Activated CD4-positive, alpha-beta memory T cell treated with anti-CD3 and anti-CD28 coated beads for 36 hours (primary cell): ENCODE measurements at regions of chr19 and their contacts with region 1.

Region 1: GRCh38 chr19:35044317-35045117 is 3.0 kb downstream of the HPN start:
- DNase-seq: peak; percentile 77
- H3K4me3 Mint-ChIP-seq: no peak overlapping the region
- H3K27ac Mint-ChIP-seq: peak overlapping the region; percentile 21
- H3K4me1 Mint-ChIP-seq: peaks cover 25% of the 10 kb centered on the region
- H3K27me3 Mint-ChIP-seq: peaks cover 10% of the 10 kb centered on the region

Region 2: GRCh38 chr19:35030257-35031071 is 14.1 kb before region 1 on chr19 and contains the start of gene SCN1B:
- CTCF ChIA-PET with region 1: interaction called, 16 read pairs
- POLR2A ChIA-PET with region 1: interaction called, 3 read pairs
- intact Hi-C with region 1: no loop called
- DNase-seq: peak; percentile 84
- H3K4me3 Mint-ChIP-seq: peak within 1 kb of the TSS; percentile 58
- H3K27ac Mint-ChIP-seq: no peak within 1 kb of the TSS
- H3K4me1 Mint-ChIP-seq: peaks cover 8% of the 10 kb centered on the region
- H3K27me3 Mint-ChIP-seq: peaks cover 13% of the 10 kb centered on the region
- total RNA-seq, gene SCN1B: 1.1 to 1.6 TPM

Region 3: DNA sequence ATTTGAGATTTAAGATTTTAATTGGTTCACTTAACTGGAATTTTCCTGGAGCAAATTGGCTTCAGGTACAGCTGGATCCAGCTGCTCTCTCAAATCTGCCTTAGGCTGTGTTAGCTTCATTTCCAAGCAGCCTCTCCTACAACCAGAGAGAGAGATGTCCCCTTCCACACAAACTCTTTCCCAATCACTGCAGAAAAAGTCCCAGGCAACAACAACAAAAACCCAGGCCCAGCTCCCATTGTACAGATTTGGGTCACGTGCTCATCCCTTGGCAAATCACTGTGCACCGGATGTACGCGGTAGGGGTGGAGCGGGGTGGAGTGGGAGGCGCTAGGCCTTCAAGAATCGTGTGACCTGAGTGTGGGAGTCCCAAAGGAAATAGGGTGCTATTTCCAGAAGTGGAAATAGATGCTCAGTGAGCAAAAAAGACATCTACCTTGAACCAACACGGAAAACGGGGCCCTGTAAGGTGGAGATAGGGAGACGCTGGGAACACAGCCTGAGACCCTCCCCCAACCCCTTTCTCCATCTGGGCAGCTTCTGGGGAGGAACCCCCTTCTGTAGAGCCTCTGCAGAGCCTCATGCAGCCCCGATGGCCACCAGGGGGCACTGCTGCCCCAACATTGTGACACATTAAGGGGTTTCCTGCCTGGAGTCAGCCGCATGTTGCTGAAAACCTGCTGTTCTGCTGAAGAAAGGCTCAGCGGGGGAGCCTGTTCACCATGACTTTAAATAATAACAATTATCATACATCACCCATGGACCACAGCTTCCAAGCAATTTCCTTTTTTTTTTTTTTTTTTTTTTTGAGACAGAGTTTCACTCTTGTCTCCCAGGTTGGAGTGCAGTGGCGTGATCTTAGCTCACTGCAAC is 22.4 kb after region 1 on chr19:
- CTCF ChIA-PET with region 1: interaction called, 22 read pairs
- POLR2A ChIA-PET with region 1: no interaction called
- intact Hi-C with region 1: no loop called
- DNase-seq: peak; percentile 94
- H3K4me3 Mint-ChIP-seq: peak overlapping the region; percentile 21
- H3K27ac Mint-ChIP-seq: peak overlapping the region; percentile 55
- H3K4me1 Mint-ChIP-seq: peaks cover 18% of the 10 kb centered on the region
- H3K27me3 Mint-ChIP-seq: no peaks in the 10 kb centered on the region

Region 4: DNA sequence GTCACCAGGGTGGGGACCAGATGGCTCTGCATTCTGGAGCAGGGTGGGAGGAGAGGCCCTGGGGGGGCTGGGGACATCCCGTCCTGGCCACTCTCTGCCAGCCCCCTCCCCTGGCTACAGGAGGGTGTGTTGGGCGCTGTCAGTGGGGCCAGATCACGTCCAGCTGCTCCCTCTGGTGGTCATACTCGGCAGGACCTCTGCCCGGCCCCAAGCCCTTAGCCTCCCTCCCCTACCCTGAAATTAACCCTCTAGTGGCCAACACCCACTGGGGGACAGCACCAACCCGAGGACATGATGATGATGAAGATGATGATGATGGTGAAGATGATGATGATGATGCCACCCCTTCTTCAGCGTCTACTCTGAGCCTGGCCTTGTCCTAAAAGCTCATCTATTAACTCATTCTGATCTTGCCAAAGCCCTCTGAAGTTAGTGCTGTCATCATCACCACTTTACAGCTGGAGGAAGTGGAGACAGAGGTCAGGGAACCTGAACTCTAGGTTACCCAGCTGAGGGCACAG is 90.9 kb after region 1 on chr19:
- CTCF ChIA-PET with region 1: interaction called, 16 read pairs
- POLR2A ChIA-PET with region 1: no interaction called
- intact Hi-C with region 1: loop called (anchors 5 kb)
- DNase-seq: peak; percentile 82
- H3K4me3 Mint-ChIP-seq: no peak overlapping the region
- H3K27ac Mint-ChIP-seq: no peak overlapping the region
- H3K4me1 Mint-ChIP-seq: peaks cover 3% of the 10 kb centered on the region
- H3K27me3 Mint-ChIP-seq: no peaks in the 10 kb centered on the region